ENCODE measurements at regions of chr22 and their contacts with region 1.

Region 1: GRCh38 chr22:19111140-19111539 is 11.1 kb downstream of the DGCR2 start:
- DNase-seq: no peak
- ATAC-seq: no peak
- H3K4me3 ChIP-seq: no peak overlapping the region
- H3K27ac ChIP-seq: no peak overlapping the region
- H3K4me1 ChIP-seq: no peaks in the 10 kb centered on the region; the same call in 1 of the 2 replicates
- H3K27me3 ChIP-seq: no peaks in the 10 kb centered on the region
- CTCF ChIP-seq: no peak

Region 2: GRCh38 chr22:18998998-18999397 is 112.1 kb before region 1 on chr22:
- CTCF ChIA-PET with region 1: no interaction called
- POLR2A ChIA-PET with region 1: no interaction called
- in situ Hi-C with region 1: no loop called
- intact Hi-C with region 1: no loop called
- DNase-seq: no peak
- ATAC-seq: no peak
- H3K4me3 ChIP-seq: no peak overlapping the region
- H3K27ac ChIP-seq: no peak overlapping the region
- H3K4me1 ChIP-seq: no peaks in the 10 kb centered on the region
- H3K27me3 ChIP-seq: no peaks in the 10 kb centered on the region; the same call in 1 of the 2 replicates
- CTCF ChIP-seq: no peak

Region 3: DNA sequence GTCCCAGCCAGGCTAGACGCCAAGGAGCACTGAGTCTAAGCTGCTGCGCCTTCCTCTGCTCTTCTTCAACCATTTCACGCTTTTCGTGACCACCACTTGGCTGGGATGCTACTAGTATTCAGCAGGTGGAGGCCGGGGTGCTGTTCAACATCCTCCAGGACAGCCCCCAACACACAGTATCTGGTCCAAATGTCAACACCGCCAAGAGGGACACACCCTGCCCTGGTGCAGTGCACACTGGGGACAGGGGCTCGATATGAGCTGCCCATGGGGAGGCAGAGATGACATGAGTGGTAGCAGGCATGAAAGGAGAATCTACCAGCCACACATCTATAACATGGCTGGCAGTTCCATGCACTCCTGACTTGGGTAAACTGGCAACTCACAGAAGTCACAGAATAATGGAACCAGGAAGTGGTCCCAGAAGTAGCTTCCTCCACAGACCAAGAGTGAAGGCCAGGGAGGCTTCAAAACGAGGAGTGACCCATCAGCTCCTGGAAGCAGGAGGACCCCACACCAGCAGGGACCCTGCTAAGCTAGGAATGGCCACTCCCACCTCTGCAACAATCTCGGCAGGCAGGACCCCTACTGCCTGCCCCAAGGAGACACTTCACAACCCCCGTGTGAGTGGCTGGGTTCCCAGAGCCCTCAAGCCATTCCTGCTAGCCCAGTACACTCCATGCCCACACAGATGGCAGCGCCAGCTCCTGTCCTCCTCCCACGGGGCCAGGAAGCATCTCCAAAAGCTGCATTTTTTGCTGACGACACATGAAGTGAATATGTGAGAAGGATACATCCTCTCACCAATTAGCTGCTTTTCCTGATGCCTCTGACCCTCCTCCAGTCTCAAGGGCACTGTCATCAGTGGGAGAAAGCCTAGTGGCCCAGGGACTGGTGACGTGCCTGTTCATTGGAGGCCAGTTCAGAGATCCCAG is 67.8 kb before region 1 on chr22:
- CTCF ChIA-PET with region 1: no interaction called
- POLR2A ChIA-PET with region 1: no interaction called
- in situ Hi-C with region 1: no loop called
- intact Hi-C with region 1: no loop called
- DNase-seq: no peak
- ATAC-seq: no peak
- H3K4me3 ChIP-seq: no peak overlapping the region
- H3K27ac ChIP-seq: no peak overlapping the region
- H3K4me1 ChIP-seq: no peaks in the 10 kb centered on the region
- H3K27me3 ChIP-seq: no peaks in the 10 kb centered on the region
- CTCF ChIP-seq: no peak

Region 4: DNA sequence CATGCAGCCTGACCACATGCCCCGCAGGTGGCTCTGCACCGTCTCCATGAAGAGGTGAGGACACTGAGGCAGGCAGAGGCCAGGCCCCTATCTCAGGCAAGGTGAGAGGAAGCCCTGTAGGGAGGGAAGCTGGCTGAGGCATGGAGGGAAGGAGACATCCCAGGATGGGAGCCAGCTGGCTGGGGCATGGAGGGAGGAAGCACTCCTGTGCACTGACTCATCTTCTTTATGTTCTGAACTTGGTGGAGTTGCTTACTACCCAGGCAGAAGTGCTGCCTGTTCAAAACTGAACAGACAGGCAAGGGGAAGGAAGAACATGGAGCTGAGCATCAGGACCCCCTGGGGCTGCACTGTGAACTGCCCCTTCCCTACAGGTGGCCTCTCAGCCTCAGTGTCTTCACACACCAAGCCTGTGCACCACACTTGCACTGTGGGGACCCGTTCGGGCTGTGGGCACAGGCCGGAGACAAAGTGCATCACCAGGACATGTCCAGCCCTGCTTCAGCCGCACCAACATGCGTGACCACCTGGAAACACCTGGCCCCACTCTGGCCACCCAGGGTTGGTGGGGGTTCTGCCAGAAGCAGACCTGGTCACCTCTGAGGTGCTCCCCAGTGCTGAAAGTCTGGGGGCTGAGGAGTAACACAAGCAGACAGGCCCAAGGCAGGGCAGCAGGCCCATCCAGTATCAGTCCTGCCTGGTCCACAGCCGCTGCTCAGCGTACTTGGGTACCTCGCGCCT is 44.4 kb before region 1 on chr22:
- CTCF ChIA-PET with region 1: no interaction called
- POLR2A ChIA-PET with region 1: no interaction called
- in situ Hi-C with region 1: no loop called
- intact Hi-C with region 1: no loop called
- DNase-seq: no peak
- ATAC-seq: no peak
- H3K4me3 ChIP-seq: no peak overlapping the region
- H3K27ac ChIP-seq: no peak overlapping the region
- H3K4me1 ChIP-seq: no peaks in the 10 kb centered on the region
- H3K27me3 ChIP-seq: no peaks in the 10 kb centered on the region
- CTCF ChIP-seq: no peak

Region 5: GRCh38 chr22:19132693-19133400 is 21.7 kb after region 1 on chr22:
- CTCF ChIA-PET with region 1: no interaction called
- POLR2A ChIA-PET with region 1: no interaction called
- in situ Hi-C with region 1: no loop called
- intact Hi-C with region 1: no loop called
- DNase-seq: no peak
- ATAC-seq: no peak
- H3K4me3 ChIP-seq: no peak overlapping the region
- H3K27ac ChIP-seq: no peak overlapping the region
- H3K4me1 ChIP-seq: no peaks in the 10 kb centered on the region
- H3K27me3 ChIP-seq: no peaks in the 10 kb centered on the region
- CTCF ChIP-seq: no peak

Region 6: GRCh38 chr22:19143967-19144400 is 32.8 kb after region 1 on chr22:
- CTCF ChIA-PET with region 1: no interaction called
- POLR2A ChIA-PET with region 1: interaction called, 10 read pairs
- in situ Hi-C with region 1: no loop called
- intact Hi-C with region 1: no loop called
- DNase-seq: no peak
- ATAC-seq: peak; percentile 17; the same call in 1 of the 2 replicates
- H3K4me3 ChIP-seq: peak overlapping the region; percentile 97 to 98
- H3K27ac ChIP-seq: peak overlapping the region; percentile 85
- H3K4me1 ChIP-seq: no peaks in the 10 kb centered on the region
- H3K27me3 ChIP-seq: no peaks in the 10 kb centered on the region; the same call in 1 of the 2 replicates
- CTCF ChIP-seq: no peak